ENCODE measurements at regions of chr11 and their contacts with region 1.

Region 1: DNA sequence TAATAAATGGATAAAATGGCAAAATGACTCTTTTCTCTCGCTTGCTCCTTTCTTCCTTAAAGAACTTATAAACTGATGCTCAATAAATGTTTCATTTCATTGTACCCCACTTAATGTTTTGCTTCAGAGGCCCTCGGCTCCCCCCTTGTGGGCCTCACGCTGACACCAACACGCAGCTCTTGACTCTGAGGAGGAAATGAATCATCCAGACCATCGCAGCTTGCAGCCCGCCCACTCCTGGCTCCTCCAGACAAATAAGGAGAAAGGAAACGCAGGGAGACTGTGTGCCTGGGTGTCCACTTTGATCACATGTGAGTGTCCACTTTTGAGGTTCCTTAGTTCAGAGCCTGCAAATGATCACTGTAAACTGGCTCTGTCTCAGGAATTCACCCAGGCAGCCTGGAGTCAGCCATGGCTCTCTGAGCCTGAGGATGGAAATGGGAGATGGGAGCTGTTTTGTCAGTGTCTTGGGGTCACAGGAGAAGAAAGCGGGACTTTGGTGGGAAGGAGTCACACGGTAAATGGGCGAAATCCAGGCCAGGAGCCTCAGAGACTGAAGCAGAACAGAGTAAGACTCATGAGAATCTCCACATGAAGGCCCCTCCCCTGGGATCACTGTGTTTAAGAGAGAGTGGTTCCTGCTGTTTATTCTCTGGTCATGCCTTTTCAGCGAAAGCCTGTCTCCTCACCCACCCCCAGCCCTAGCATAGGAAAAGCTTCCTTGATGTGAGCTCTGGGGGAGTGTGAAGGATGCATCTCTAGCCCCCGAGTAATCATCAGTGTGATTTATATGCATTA is 96.5 kb downstream of the CWC15 start:
- DNase-seq: peak; percentile 95
- H3K4me3 ChIP-seq: no peak overlapping the region
- H3K27ac ChIP-seq: peak overlapping the region; percentile 70 to 83 (median 80)
- H3K4me1 ChIP-seq: peaks cover 17 to 69% (median 60%) of the 10 kb centered on the region in 4 donors
- H3K27me3 ChIP-seq: no peaks in the 10 kb centered on the region
- CTCF ChIP-seq: peak in 2 of 3 experiments; percentile 34 to 47
- EP300 ChIP-seq: no peak
- POLR2A ChIP-seq: no peak

Region 2: GRCh38 chr11:94623120-94623735 is 253.6 kb before region 1 on chr11:
- intact Hi-C with region 1: loop called (anchors 5 kb)
- DNase-seq: no peak
- H3K4me3 ChIP-seq: no peak overlapping the region
- H3K27ac ChIP-seq: no peak overlapping the region
- H3K4me1 ChIP-seq: peaks cover 0 to 6% (median 0%) of the 10 kb centered on the region in 4 donors
- H3K27me3 ChIP-seq: no peaks in the 10 kb centered on the region
- CTCF ChIP-seq: peak; percentile 78 to 88 (median 86)
- EP300 ChIP-seq: no peak
- POLR2A ChIP-seq: no peak

Region 3: GRCh38 chr11:94776351-94777321 is 100.2 kb before region 1 on chr11:
- intact Hi-C with region 1: loop called (anchors 10 kb)
- DNase-seq: no peak
- H3K4me3 ChIP-seq: no peak overlapping the region
- H3K27ac ChIP-seq: peak overlapping the region; percentile 63 to 77 (median 66)
- H3K4me1 ChIP-seq: peaks cover 43 to 100% (median 95%) of the 10 kb centered on the region in 4 donors
- H3K27me3 ChIP-seq: no peaks in the 10 kb centered on the region
- CTCF ChIP-seq: no peak
- EP300 ChIP-seq: no peak
- POLR2A ChIP-seq: no peak

Region 4: DNA sequence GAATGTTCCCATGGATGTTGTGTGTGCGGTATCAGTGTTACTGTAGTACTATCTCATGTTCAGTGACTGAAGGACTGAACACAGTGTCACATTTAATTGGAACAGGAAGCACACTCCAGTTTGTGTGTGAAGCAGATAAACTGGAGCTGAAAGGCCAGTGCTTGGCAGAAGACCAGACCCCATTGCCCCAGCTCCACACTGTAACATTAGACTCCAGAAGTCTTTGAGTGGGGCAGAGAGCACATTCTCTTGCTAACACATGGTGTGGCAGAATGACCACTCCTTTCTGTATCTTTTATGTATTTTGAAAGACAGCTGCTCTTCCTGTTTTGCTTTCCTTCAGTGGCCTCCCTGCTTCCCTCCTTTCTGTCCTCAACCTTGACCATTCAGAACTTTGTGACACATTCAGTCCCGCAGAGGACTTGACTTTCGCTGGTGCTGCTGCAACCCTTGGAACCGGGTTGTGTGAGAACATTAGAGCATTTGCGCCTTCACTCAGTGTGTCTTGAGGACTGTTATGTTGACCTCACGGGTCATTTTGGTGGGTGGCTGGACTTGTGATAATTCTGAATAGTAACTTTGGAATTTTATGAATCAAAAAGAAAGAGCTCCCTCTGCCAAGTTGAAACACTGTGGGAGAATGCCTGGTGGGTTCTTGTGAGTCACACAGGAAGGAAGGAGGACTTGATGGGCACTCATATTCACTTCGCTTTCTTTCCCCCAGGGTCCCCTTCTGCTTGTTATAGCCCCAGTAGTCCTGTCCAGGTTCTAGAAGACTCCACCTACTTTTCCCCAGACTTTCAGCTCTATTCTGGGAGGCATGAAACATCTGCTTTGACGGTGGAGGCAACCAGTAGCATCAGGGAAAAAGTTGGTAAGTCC is 82.3 kb before region 1 on chr11:
- intact Hi-C with region 1: loop called (anchors 5 kb)
- DNase-seq: no peak
- H3K4me3 ChIP-seq: peak overlapping the region in 2 of 4 donors; percentile 2 to 19
- H3K27ac ChIP-seq: peak overlapping the region; percentile 49 to 65 (median 62)
- H3K4me1 ChIP-seq: peaks cover 33 to 97% (median 92%) of the 10 kb centered on the region in 4 donors
- H3K27me3 ChIP-seq: no peaks in the 10 kb centered on the region
- CTCF ChIP-seq: no peak
- EP300 ChIP-seq: no peak
- POLR2A ChIP-seq: no peak

Region 5: DNA sequence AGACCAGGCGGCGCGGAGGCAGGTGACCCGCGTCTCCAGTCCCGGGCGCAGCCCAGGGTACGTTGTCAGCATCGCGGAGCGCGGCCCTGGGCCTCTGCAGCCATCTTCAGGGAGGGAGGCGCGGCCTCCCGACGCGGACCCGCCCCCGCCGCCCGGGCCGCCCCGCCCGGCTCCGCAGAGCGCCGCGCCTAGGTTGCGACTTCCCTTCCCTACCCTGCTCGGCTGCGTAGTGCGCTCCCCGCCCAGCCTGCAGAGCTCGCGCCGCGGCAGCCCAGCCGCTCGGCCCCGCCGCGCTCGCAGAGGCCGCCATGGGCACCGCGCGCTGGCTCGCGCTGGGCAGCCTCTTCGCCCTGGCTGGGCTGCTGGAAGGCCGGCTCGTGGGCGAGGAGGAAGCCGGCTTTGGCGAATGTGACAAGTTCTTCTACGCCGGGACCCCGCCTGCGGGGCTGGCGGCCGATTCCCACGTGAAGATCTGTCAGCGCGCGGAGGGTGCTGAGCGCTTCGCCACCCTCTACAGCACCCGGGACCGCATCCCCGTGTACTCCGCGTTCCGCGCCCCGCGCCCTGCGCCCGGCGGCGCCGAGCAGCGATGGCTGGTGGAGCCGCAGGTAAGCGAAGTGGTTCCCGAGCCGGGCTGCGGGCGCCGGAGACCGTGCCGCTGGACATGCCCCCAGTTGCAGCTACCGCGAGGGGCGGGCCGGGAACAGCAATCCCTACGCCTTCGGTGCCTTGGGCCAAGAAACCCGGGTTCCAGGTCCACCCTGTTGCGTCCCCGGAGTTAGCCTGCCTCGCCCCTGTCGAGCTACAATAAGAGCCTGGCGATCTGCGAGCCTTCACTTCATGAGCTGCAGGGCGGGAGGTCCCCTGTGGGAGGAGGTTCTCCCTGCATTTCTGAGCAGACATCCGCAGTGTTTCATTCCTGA is 213.0 kb after region 1 on chr11 and contains the start of gene ENDOD1:
- intact Hi-C with region 1: no loop called
- DNase-seq: peak; percentile 90
- H3K4me3 ChIP-seq: peak within 1 kb of the TSS; percentile 84 to 98 (median 91)
- H3K27ac ChIP-seq: peak within 1 kb of the TSS; percentile 93 to 95 (median 94)
- H3K4me1 ChIP-seq: peaks cover 14 to 45% (median 39%) of the 10 kb centered on the region in 4 donors
- H3K27me3 ChIP-seq: no peaks in the 10 kb centered on the region
- CTCF ChIP-seq: peak in 1 of 3 experiments; percentile 11
- EP300 ChIP-seq: no peak
- POLR2A ChIP-seq: no peak
- total RNA-seq, gene ENDOD1: 37.6 to 43.2 (median 41.0) TPM